ENCODE measurements at regions of chr14 and their contacts with region 1.

Region 1: GRCh38 chr14:59126710-59127432 is 61.6 kb upstream of the DAAM1 start:
- DNase-seq: peak; percentile 83
- H3K4me3 ChIP-seq: no peak overlapping the region
- H3K27ac ChIP-seq: no peak overlapping the region
- H3K4me1 ChIP-seq: peaks cover 21% of the 10 kb centered on the region
- CTCF ChIP-seq: peak; percentile 98

Region 2: DNA sequence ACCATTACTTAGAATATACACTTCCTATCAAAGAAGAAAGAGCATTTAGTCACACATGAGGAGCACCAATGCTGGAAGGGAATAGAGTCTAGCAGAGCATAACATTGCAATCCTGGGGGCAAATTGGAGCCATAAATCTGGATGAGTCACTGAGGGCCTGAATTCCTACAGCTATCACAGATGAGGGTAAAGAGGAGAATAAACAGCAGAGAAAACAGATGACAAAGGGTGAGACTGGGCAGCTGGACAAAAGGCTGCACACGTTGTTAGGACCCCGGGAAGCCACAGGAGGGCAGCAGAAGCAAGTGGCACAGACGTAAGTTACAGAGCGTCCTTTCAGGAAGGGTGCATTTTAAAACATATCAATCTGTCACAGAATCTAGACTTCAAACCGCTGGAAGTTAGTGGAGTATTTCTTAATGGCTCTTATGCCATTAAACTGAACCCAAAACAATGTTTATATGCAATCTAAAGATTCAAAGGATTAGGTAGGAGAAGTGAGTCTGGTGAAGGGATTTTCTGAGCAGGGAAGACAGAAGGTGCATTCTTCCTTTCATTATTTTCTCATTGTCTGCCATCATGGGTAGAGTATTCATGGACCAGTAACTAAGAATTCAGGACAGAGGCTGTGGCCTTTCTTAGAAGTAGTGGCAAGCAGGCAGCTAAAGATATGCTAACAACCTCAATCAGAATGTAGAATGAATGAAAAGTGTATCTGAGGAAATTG is 98.2 kb before region 1 on chr14:
- CTCF ChIA-PET with region 1: no interaction called
- POLR2A ChIA-PET with region 1: interaction called, 3 read pairs
- intact Hi-C with region 1: loop called (anchors 1 kb)
- DNase-seq: peak; percentile 76
- H3K4me3 ChIP-seq: no peak overlapping the region
- H3K27ac ChIP-seq: no peak overlapping the region
- H3K4me1 ChIP-seq: no peaks in the 10 kb centered on the region
- CTCF ChIP-seq: peak; percentile 98

Region 3: DNA sequence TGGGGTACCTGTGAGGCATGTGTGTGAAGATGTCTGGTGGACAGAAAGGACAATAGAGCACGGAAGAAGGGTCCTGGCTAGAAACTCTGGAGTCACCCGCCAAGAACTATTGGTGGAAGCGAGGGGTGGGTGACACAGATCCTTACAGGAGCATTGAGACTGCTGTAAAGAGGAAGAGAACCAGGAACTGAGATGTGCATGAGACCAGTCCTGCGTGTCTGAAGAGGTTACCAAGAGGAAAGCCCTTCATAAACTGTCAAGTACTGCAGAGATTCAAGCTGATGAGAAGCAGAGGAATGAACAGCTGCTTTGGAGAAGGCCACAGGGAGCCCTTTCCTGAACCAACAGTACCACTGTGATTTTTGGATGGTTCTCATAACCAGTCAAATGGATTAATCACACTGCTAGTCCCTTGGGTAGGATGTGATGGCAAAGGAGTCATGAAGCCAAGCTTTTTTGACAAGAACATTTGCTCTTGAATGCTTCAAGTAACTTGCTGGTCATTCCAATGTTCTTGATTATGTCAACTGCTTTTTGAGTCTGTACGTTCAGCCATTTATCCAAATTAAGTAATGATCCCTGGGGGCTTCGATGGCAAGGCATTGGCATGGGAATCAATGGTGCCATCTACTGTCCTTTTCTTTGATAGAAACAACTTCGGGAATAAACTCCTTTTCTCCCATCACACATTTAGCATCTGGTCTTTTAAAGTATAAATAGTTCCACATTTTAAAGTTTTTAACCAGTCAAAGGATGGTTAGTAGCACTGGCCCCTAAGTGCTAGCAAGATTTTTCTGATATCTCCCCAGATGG is 295.4 kb after region 1 on chr14:
- CTCF ChIA-PET with region 1: no interaction called
- POLR2A ChIA-PET with region 1: interaction called, 3 read pairs
- intact Hi-C with region 1: loop called (anchors 1 kb)
- DNase-seq: peak; percentile 64
- H3K4me3 ChIP-seq: no peak overlapping the region
- H3K27ac ChIP-seq: peak overlapping the region; percentile 16
- H3K4me1 ChIP-seq: peaks cover 26% of the 10 kb centered on the region
- CTCF ChIP-seq: peak; percentile 79

Region 4: DNA sequence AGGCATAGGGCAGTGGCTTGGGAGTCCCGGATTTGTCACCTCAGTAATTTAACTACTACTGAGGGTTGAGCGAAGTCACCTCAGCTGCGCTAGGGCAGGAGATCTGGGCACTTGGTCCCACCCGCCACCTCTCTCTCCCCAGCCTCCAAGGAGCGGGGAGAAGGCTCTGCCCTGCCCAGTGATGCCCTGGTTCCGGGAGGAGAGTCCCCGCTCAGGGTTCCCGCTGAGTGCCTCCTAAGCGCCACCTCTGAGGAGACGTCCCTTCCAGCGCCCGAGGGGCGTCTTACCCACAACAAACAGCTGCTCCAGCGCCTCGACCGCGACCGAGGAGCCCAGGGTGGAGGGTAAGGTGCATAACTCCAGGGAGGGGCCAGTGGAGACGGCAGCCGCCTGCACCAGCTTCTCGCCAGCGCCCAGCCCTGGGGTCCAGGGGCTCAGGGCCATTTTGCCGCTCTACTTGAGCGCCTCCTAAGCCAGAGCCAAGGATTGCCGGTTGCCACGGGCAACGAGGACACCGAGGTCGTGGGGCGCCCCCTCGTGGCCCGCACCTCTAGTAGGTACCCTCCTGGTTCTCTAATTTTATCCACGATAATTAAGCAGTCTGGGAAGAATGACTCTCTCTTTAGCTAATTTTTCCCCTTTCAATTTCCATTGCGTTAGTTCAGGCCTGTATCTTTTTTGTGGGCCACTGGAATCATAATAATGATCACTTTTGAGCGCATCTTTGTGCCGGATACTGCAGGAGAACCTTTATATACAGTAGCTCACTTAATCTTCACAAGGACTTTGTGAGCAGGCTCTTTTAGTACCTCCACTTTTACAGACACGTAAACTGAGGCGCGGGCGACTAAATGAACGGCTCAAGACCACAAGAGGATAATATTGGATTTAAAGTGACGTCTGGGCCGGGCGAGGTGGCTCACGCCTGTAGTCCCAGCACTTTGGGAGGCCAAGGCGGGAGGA is 449.7 kb after region 1 on chr14 and contains the start of gene CCDC175:
- CTCF ChIA-PET with region 1: no interaction called
- POLR2A ChIA-PET with region 1: no interaction called
- intact Hi-C with region 1: loop called (anchors 5 kb)
- DNase-seq: peak; percentile 81
- H3K4me3 ChIP-seq: peak within 1 kb of the TSS; percentile 41
- H3K27ac ChIP-seq: no peak within 1 kb of the TSS
- H3K4me1 ChIP-seq: no peaks in the 10 kb centered on the region
- CTCF ChIP-seq: peak; percentile 88
- total RNA-seq, gene CCDC175: not detected in 2 replicates

Measured in OCI-LY7 (cell line).